Dendritic cell treated with granulocyte-macrophage colony-stimulating factor and Interleukin-4, amounts not matched to agents 40 ng/mL and 50 ng/mL, for 4 days (primary cell): ENCODE measurements at regions of chr12 and their contacts with region 1.

Region 1: GRCh38 chr12:113048716-113049127 is 7.8 kb upstream of the DTX1 start:
- H3K4me3 Mint-ChIP-seq: no peak overlapping the region
- H3K27ac Mint-ChIP-seq: no peak overlapping the region
- H3K4me1 Mint-ChIP-seq: peaks cover 7% of the 10 kb centered on the region
- H3K27me3 Mint-ChIP-seq: peaks cover 36% of the 10 kb centered on the region

Region 2: DNA sequence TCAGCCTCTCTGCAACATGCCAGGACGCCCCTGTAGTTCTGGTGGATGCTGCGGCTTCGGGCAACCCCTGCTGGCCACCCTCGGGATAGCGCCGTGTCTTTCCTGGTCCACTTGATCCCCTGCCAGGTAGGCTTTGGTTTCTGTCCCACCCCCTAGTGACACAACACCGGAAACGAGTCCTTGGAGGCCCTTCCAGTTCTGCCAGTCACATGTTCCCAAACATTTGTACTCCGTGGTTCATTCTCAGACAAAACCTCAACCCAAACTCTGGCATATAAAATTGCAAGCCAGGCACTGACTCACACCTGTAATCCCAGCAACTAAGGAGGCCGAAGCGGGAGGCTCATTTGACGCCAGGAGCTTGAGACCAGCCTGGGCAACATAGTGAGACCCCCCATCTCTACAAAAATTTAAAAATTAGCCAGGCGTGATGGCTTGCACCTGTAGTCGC is 49.7 kb after region 1 on chr12:
- intact Hi-C with region 1: loop called (anchors 2 kb)
- H3K4me3 Mint-ChIP-seq: no peak overlapping the region
- H3K27ac Mint-ChIP-seq: no peak overlapping the region
- H3K4me1 Mint-ChIP-seq: peaks cover 10% of the 10 kb centered on the region
- H3K27me3 Mint-ChIP-seq: peaks cover 25% of the 10 kb centered on the region

Region 3: DNA sequence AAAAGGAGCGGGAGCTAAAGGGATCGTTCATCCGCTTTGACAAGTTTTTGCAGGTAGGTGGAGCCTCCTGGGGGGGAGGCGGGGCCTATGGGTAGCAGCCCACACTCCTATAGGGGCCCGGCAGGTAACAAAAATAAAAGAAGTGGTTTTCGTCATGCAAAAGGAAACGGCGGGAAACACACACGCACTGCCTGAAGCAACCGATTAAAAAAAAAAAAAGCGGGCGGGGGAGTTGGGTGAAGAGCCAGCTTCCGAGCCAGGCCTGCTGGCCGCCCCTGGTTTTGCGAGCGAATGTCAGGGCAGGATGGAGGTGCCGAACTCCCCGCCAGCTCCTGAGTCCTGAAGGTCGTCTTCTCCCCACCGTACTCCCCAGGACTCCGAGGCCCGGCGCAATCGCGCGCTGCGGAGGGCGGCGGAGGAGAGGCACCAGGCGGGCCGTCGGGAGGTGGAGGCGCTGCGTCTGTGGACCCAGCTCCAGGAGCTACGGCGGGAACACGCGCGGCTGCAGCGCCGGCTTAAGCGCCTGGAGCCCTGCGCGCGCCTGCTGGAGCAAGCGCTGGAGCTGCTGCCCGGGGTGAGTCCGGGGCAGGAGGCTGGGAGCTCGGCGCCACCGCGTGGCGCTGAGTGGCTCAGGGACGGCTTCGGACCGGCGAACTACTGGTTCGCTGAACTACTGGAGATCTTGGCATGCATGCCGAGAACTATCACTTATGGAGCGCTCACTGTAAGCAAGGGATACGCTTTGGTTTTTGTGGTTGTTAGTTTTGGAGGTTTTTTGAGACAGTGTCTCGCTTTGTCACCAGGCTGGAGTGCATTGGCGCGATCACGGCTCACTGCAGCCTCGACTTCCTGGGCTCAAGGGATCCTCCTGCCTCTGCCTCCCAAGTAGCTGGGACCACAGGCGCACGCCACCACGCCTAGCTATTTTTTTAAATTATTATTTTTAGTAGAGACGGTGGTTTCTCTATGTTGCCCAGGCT is 104.4 kb after region 1 on chr12:
- intact Hi-C with region 1: loop called (anchors 1 kb)
- H3K4me3 Mint-ChIP-seq: peak overlapping the region; percentile 81
- H3K27ac Mint-ChIP-seq: peak overlapping the region; percentile 59
- H3K4me1 Mint-ChIP-seq: peaks cover 50% of the 10 kb centered on the region
- H3K27me3 Mint-ChIP-seq: peaks cover 72% of the 10 kb centered on the region

Region 4: DNA sequence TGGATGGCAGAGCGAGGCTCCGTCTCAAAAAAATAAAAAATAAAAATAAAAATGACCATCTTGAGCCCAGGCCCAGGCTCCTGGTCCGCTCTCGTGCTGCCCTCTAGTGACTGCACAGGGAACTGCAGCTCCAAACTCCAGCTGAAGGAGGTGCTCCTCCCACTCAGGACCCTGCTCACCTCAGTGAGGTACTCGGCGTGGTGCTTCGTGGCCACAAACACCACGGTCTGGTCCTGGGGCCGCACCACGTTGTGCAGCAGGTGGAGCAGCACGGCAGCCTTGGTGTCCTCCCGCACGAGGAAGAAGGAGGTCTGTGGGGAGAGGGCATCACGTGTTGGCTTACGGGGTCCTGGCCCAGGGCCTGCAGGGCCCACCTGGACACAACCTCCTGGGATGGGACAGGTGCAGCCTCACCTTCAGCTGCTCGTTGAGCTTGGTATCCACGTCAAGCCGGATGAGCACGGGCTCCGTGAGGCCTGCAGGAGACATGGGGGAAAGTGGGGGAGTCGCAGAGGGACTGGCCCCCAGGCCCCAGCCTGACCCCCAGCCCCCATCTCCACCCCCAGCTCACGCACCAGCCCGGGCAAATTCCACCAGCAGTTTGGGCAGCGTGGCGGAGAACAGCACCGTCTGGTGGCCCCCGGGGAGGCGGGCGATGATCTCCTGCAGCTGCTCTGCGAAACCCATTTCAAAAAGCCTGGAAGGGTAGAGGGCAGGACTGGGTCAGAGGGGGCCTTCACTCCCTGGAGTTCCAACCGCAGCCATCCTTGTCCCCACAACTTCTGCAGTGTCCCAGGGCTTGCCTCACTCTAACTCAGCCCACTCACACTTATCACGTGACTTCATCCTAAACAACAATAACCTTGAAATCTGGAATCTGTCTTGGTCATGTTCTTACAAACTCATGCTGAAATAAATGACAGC is 126.0 kb after region 1 on chr12:
- intact Hi-C with region 1: loop called (anchors 1 kb)
- H3K4me3 Mint-ChIP-seq: no peak overlapping the region
- H3K27ac Mint-ChIP-seq: peak overlapping the region; percentile 7
- H3K4me1 Mint-ChIP-seq: peaks cover 9% of the 10 kb centered on the region
- H3K27me3 Mint-ChIP-seq: no peaks in the 10 kb centered on the region